ENCODE measurements at regions of chr16 and their contacts with region 1.

Region 1: GRCh38 chr16:11255737-11256660 is at the start of gene SOCS1:
- DNase-seq: peak; percentile 78
- ATAC-seq: peak; percentile 69
- H3K4me3 ChIP-seq: peak within 1 kb of the TSS; percentile 87 to 98 (median 95)
- H3K27ac ChIP-seq: peak within 1 kb of the TSS; percentile 93
- H3K4me1 ChIP-seq: peaks cover 83% of the 10 kb centered on the region
- H3K27me3 ChIP-seq: no peaks in the 10 kb centered on the region; a peak in 2 of 5 replicates
- CTCF ChIP-seq: peak; percentile 81
- EP300 ChIP-seq: 0 out of 4 replicates have a peak, but pooled peaks of 1 of the 2 experiments have one; percentile 16
- POLR2A ChIP-seq: peak in 1 of 2 experiments; percentile 99; a peak in 2 of 4 replicates
- RAD21 ChIP-seq: peak; percentile 99
- total RNA-seq, gene SOCS1: 3.3 and 5.3 TPM in 2 replicates

Region 2: DNA sequence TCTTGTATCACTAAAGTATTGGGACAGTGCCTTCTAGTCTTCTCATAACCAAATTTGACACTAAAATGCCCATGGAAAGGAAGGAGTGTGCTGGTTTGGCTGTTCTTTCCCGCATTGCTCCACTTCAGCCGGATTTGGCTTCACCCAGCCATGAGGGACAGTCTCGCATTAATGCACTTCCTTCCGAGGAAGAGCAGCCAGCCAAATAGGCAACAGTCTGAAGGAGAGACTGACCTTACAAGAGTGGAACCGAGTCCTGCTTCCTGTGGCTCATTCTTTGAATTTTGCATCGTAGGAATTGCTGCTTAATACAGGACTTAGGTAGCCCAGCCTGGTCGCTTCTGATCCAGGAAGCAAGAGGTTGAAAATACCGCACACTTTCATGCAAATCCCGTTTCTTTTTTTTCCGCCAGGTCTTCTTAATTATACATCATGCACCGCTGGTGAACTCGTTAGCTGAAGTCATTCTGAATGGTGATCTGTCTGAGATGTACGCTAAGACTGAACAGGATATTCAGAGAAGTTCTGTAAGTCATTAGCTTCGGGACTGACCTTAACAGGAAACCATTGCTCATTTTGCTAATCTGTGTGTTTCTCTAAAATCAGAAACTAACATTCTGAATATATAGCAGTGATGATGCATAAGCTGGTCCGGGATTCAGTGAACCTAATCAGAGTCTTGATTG is 273.4 kb before region 1 on chr16:
- CTCF ChIA-PET with region 1: no interaction called
- POLR2A ChIA-PET with region 1: interaction called, 10 read pairs
- in situ Hi-C with region 1: no loop called
- intact Hi-C with region 1: no loop called
- DNase-seq: no peak
- ATAC-seq: no peak
- H3K4me3 ChIP-seq: no peak overlapping the region
- H3K27ac ChIP-seq: no peak overlapping the region
- H3K4me1 ChIP-seq: peaks cover 28% of the 10 kb centered on the region
- H3K27me3 ChIP-seq: no peaks in the 10 kb centered on the region
- CTCF ChIP-seq: no peak
- EP300 ChIP-seq: no peak
- POLR2A ChIP-seq: no peak
- RAD21 ChIP-seq: no peak

Region 3: GRCh38 chr16:11234884-11235702 is 20.9 kb before region 1 on chr16:
- CTCF ChIA-PET with region 1: no interaction called
- POLR2A ChIA-PET with region 1: interaction called, 20 read pairs
- in situ Hi-C with region 1: no loop called
- intact Hi-C with region 1: no loop called
- DNase-seq: no peak
- ATAC-seq: peak; percentile 43
- H3K4me3 ChIP-seq: no peak overlapping the region
- H3K27ac ChIP-seq: no peak overlapping the region
- H3K4me1 ChIP-seq: peaks cover 33% of the 10 kb centered on the region
- H3K27me3 ChIP-seq: peaks cover 1 to 21% of the 10 kb centered on the region in 2 experiments; a peak in 3 of 5 replicates
- CTCF ChIP-seq: no peak
- EP300 ChIP-seq: no peak
- POLR2A ChIP-seq: no peak
- RAD21 ChIP-seq: no peak

Region 4: DNA sequence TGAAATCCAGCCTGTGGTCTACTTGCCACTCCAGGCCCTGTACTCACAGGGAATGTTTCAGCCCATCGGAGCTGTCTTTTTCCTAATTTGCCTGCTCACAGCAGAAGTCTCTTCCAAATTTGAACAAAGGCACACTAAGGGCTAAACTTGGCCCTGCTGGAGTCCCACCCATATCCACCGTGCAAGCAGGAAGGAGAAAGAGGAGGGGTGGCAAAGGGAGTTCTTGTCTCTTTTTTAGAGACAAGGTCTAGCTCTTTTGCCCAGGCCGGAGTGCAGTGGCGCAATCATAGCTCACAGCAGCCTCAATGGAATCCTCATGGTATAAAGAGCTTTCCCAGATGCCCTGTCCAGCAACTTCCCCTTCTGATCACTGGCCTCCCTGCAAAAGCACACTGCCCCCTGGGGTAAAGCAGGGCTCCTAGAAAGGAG is 27.8 kb after region 1 on chr16:
- CTCF ChIA-PET with region 1: no interaction called
- POLR2A ChIA-PET with region 1: interaction called, 351 read pairs
- in situ Hi-C with region 1: no loop called
- intact Hi-C with region 1: loop called (anchors 2 kb)
- DNase-seq: peak; percentile 69
- ATAC-seq: peak; percentile 45
- H3K4me3 ChIP-seq: no peak overlapping the region
- H3K27ac ChIP-seq: peak overlapping the region; percentile 52
- H3K4me1 ChIP-seq: peaks cover 91% of the 10 kb centered on the region
- H3K27me3 ChIP-seq: no peaks in the 10 kb centered on the region
- CTCF ChIP-seq: peak; percentile 45
- EP300 ChIP-seq: peak in 1 of 2 experiments; percentile 45; a peak in 1 of 4 replicates
- POLR2A ChIP-seq: no peak
- RAD21 ChIP-seq: peak; percentile 40; the same call in 1 of the 2 replicates

Region 5: DNA sequence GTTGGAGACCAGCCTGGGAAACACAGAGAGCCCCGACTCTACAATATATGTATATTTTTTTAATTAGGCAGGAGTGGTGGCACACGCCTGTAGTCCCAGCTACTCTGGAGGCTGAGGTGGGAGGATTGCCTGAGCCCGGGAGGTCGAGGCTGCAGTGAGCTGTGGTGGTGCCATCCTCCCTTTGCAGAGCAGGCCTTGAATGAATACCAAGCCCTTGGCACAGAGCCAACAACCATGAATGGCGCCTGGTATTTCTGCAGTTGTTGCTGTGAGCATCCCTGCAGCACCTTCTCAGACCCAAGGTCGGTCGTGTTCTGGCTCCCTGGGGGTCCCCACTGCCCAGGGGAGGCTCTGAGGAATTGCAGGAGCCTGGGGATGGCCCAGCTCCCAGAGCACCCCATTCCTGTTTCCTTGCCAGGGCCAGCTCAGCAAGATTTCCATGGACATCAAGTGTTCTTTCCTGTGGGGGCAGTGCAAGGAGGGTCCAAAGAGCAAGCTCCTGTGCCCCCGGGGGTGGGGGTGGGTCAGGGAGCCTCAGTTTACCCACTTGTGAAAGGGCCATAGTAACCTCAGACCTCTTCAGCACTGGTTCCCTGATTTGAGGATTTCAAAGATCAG is 63.6 kb after region 1 on chr16:
- CTCF ChIA-PET with region 1: no interaction called
- POLR2A ChIA-PET with region 1: interaction called, 10 read pairs
- in situ Hi-C with region 1: no loop called
- intact Hi-C with region 1: no loop called
- DNase-seq: peak; percentile 60
- ATAC-seq: peak; percentile 20
- H3K4me3 ChIP-seq: no peak overlapping the region
- H3K27ac ChIP-seq: no peak overlapping the region
- H3K4me1 ChIP-seq: peaks cover 19% of the 10 kb centered on the region
- H3K27me3 ChIP-seq: no peaks in the 10 kb centered on the region
- CTCF ChIP-seq: no peak
- EP300 ChIP-seq: no peak
- POLR2A ChIP-seq: no peak
- RAD21 ChIP-seq: no peak

Region 6: GRCh38 chr16:11356573-11357331 is 100.8 kb after region 1 on chr16:
- CTCF ChIA-PET with region 1: interaction called, 38 read pairs
- POLR2A ChIA-PET with region 1: interaction called, 54 read pairs
- in situ Hi-C with region 1: no loop called
- intact Hi-C with region 1: loop called (anchors 1 kb)
- DNase-seq: peak; percentile 81
- ATAC-seq: peak; percentile 93
- H3K4me3 ChIP-seq: no peak overlapping the region
- H3K27ac ChIP-seq: no peak overlapping the region
- H3K4me1 ChIP-seq: peaks cover 62% of the 10 kb centered on the region
- H3K27me3 ChIP-seq: no peaks in the 10 kb centered on the region
- CTCF ChIP-seq: peak; percentile 99
- EP300 ChIP-seq: no peak
- POLR2A ChIP-seq: no peak
- RAD21 ChIP-seq: peak; percentile 99

Region 7: GRCh38 chr16:11597239-11598101 is 341.5 kb after region 1 on chr16:
- CTCF ChIA-PET with region 1: no interaction called
- POLR2A ChIA-PET with region 1: no interaction called
- in situ Hi-C with region 1: no loop called
- intact Hi-C with region 1: no loop called
- DNase-seq: no peak
- ATAC-seq: peak; percentile 84
- H3K4me3 ChIP-seq: peak overlapping the region; percentile 17 to 67 (median 29); a peak in 5 of 6 replicates
- H3K27ac ChIP-seq: no peak overlapping the region
- H3K4me1 ChIP-seq: peaks cover 65% of the 10 kb centered on the region
- H3K27me3 ChIP-seq: peaks cover 9 to 58% of the 10 kb centered on the region in 2 experiments
- CTCF ChIP-seq: peak; percentile 53
- EP300 ChIP-seq: no peak
- POLR2A ChIP-seq: no peak
- RAD21 ChIP-seq: no peak